MCF 10A (cell line): ENCODE measurements at regions of chr14 and their contacts with region 1.

Region 1: GRCh38 chr14:102235275-102235897 is 69.6 kb downstream of the MOK start:
- DNase-seq: peak; percentile 91
- H3K4me3 Mint-ChIP-seq: no peak overlapping the region
- H3K27ac Mint-ChIP-seq: no peak overlapping the region
- H3K4me1 Mint-ChIP-seq: no peaks in the 10 kb centered on the region
- H3K27me3 Mint-ChIP-seq: no peaks in the 10 kb centered on the region
- CTCF ChIP-seq: peak; percentile 66

Region 2: GRCh38 chr14:101665515-101666078 is 569.8 kb before region 1 on chr14:
- CTCF ChIA-PET with region 1: no interaction called
- POLR2A ChIA-PET with region 1: no interaction called
- intact Hi-C with region 1: no loop called
- DNase-seq: peak; percentile 64
- H3K4me3 Mint-ChIP-seq: no peak overlapping the region
- H3K27ac Mint-ChIP-seq: no peak overlapping the region
- H3K4me1 Mint-ChIP-seq: no peaks in the 10 kb centered on the region
- H3K27me3 Mint-ChIP-seq: peaks cover 90% of the 10 kb centered on the region
- CTCF ChIP-seq: peak; percentile 58

Region 3: DNA sequence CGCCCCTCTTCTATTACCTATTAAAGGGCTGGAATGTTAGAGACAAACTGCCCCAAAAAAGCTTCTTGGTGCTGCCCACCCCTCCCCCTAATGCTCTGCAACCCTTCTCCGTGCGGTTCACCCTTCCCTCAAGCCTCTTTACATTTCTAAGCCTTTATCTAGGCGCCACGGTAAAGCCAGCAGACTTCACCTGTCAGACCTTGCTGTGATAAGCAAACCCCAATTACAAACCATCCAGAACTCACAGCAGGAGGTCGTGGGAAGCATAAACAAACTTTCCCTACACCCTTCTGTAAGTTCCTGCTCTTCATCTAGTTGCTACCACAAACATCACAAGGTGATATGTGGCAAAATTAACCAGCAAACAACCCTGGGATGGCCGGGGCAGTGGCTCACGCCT is 12.7 kb after region 1 on chr14:
- CTCF ChIA-PET with region 1: no interaction called
- POLR2A ChIA-PET with region 1: no interaction called
- intact Hi-C with region 1: no loop called
- DNase-seq: no peak
- H3K4me3 Mint-ChIP-seq: no peak overlapping the region
- H3K27ac Mint-ChIP-seq: no peak overlapping the region
- H3K4me1 Mint-ChIP-seq: no peaks in the 10 kb centered on the region
- H3K27me3 Mint-ChIP-seq: no peaks in the 10 kb centered on the region
- CTCF ChIP-seq: no peak

Region 4: DNA sequence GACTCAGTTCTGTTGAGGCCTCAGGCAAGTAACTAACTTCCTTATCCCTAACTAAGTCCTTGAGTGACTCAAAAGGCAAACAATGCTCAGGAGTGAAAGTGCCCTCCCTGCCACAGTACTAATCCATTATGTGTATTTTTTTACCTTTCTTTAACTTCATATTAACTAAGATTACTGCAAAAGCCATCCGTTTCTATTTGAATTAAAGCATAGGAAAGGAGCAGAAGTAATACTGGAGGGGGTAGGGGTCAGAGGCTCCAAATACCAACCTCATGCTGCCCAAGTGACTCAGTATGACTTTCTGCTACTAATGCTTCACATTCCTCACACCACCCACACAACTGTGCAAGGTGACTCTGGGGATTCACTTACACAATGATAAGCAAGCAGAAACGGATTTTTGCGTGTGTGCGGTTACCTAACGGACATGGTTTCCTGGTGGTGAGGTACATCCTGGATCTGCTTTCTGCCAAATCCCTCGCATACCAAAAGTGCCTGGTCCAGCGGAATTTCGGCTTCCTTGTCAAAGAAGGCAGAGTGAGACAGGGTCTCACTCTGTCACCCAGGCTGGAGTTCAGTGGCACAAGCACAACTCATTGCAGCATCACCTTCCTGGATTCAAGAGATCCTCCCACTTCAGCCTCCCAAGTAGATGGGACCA is 44.4 kb after region 1 on chr14:
- CTCF ChIA-PET with region 1: no interaction called
- POLR2A ChIA-PET with region 1: interaction called, 3 read pairs
- intact Hi-C with region 1: loop called (anchors 2 kb)
- DNase-seq: peak; percentile 99
- H3K4me3 Mint-ChIP-seq: peak overlapping the region; percentile 54
- H3K27ac Mint-ChIP-seq: peak overlapping the region; percentile 80
- H3K4me1 Mint-ChIP-seq: peaks cover 22% of the 10 kb centered on the region
- H3K27me3 Mint-ChIP-seq: no peaks in the 10 kb centered on the region
- CTCF ChIP-seq: no peak

Region 5: DNA sequence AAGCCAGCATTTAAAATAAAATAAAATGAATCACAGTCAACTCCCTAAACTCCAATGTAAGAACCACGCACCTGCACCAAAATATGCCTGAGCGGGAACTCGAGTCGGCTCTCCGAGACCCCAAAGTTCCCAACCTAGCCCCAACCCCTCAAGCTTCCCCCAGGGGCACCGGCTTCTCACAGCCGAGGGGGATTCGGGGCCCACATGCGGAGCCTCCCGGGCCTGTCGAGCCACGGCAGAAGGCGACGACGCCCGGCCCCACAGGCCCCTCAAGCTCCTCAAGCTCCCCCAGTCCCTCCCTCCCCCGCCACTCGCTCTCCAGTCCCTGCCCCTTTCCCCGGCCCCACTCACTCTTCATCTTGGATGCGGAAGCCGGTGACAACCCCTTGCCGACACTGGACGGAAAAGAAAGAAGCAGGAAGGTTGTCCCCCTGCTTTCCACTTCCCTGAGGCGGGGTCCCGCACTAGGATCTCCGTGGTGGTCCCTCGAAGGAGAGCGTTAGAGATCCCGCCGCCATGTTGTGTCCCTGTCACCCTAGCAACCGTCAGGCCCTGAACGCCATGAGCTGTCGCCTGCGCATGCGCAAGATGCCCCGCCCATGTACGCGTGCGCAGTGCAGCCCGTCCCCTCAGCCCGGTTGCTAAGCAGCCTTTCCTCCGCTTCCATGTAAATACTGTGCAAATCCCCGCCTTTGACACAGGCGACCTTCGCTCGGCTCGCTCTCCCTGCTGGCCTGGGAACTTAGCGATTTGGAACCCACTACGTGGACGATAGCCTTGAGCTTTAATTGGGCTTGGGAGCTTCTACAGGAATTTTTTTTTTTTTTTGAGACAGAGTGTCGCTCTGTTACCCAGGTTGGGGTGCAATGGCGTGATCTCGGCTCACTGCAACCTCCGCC is 69.5 kb after region 1 on chr14 and contains the start of gene MOK:
- CTCF ChIA-PET with region 1: interaction called, 4 read pairs
- POLR2A ChIA-PET with region 1: no interaction called
- intact Hi-C with region 1: loop called (anchors 1 kb)
- DNase-seq: peak; percentile 96
- H3K4me3 Mint-ChIP-seq: peak within 1 kb of the TSS; percentile 87
- H3K27ac Mint-ChIP-seq: peak within 1 kb of the TSS; percentile 99
- H3K4me1 Mint-ChIP-seq: peaks cover 7% of the 10 kb centered on the region
- H3K27me3 Mint-ChIP-seq: no peaks in the 10 kb centered on the region
- CTCF ChIP-seq: no peak
- total RNA-seq, gene MOK: 61.7 and 98.9 TPM in 2 replicates